A549 (cell line): ENCODE measurements at regions of chr18 and their contacts with region 1.

Region 1: GRCh38 chr18:12744103-12744502 is 41.3 kb downstream of the PSMG2 start:
- DNase-seq: peak; percentile 52 to 69
- ATAC-seq: peak; percentile 65 to 76; a peak in 4 of 6 replicates
- H3K4me3 ChIP-seq: no peak overlapping the region
- H3K27ac ChIP-seq: no peak overlapping the region
- H3K4me1 ChIP-seq: peaks cover 36% of the 10 kb centered on the region
- CTCF ChIP-seq: peak; percentile 62
- EP300 ChIP-seq: no peak
- POLR2A ChIP-seq: no peak
- RAD21 ChIP-seq: peak; percentile 70 to 81

Region 2: GRCh38 chr18:12721495-12722275 is 22.4 kb before region 1 on chr18:
- CTCF ChIA-PET with region 1: interaction called, 83 read pairs
- POLR2A ChIA-PET with region 1: interaction called, 3 read pairs
- DNase-seq: no peak
- ATAC-seq: no peak
- H3K4me3 ChIP-seq: no peak overlapping the region
- H3K27ac ChIP-seq: no peak overlapping the region
- H3K4me1 ChIP-seq: no peaks in the 10 kb centered on the region
- CTCF ChIP-seq: no peak
- EP300 ChIP-seq: no peak
- POLR2A ChIP-seq: no peak
- RAD21 ChIP-seq: no peak

Region 3: DNA sequence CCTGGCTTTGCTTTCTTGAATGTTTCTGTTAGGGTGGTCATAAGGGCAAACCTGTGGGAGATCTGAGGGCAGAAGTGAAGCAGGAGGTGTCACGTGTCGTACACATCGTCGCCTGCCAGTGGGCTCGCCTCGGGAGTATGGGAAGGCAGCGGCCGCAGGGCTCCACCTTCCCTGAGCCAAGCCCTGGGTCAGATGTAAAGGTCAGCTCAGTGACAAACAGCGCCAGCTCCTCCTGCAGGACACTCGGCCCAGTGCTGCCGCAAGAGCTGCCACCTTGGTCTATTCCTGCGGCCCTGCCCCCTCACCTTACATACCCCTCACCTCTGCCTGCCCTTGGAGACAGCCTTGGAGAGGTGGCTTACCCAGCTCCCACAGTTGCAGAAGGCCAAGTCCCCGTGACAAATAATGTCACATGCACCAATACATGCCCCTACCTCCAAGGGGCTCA is 22.9 kb after region 1 on chr18:
- CTCF ChIA-PET with region 1: interaction called, 16 read pairs
- POLR2A ChIA-PET with region 1: no interaction called
- DNase-seq: peak; percentile 22 to 32
- ATAC-seq: peak; percentile 62 to 85; a peak in 5 of 6 replicates
- H3K4me3 ChIP-seq: no peak overlapping the region
- H3K27ac ChIP-seq: 0 out of 6 replicates have a peak overlapping the region, but pooled peaks of 1 of the 2 experiments have one; percentile 26
- H3K4me1 ChIP-seq: no peaks in the 10 kb centered on the region
- CTCF ChIP-seq: no peak
- EP300 ChIP-seq: no peak
- POLR2A ChIP-seq: no peak
- RAD21 ChIP-seq: peak; percentile 18 to 40; a peak in 2 of 5 replicates

Region 4: GRCh38 chr18:12890506-12890905 is 146.4 kb after region 1 on chr18:
- CTCF ChIA-PET with region 1: interaction called, 84 read pairs
- POLR2A ChIA-PET with region 1: no interaction called
- DNase-seq: peak in 1 of 2 experiments; percentile 22
- ATAC-seq: peak; percentile 83 to 85; a peak in 5 of 6 replicates
- H3K4me3 ChIP-seq: no peak overlapping the region
- H3K27ac ChIP-seq: no peak overlapping the region
- H3K4me1 ChIP-seq: 0 out of 3 replicates have a peak, but pooled peaks cover 3% of the 10 kb centered on the region
- CTCF ChIP-seq: no peak
- EP300 ChIP-seq: no peak
- POLR2A ChIP-seq: no peak
- RAD21 ChIP-seq: 0 out of 5 replicates have a peak, but pooled peaks of 1 of the 2 experiments have one; percentile 16

Region 5: GRCh38 chr18:12947355-12948041 is 203.4 kb after region 1 on chr18 and contains the start of gene SEH1L:
- CTCF ChIA-PET with region 1: interaction called, 10 read pairs
- POLR2A ChIA-PET with region 1: no interaction called
- DNase-seq: peak; percentile 61 to 98
- ATAC-seq: peak; percentile 88 to 94
- H3K4me3 ChIP-seq: peak within 1 kb of the TSS; percentile 85
- H3K27ac ChIP-seq: peak within 1 kb of the TSS; percentile 90 to 92
- H3K4me1 ChIP-seq: peaks cover 7% of the 10 kb centered on the region
- CTCF ChIP-seq: no peak
- EP300 ChIP-seq: no peak
- POLR2A ChIP-seq: peak; percentile 54
- RAD21 ChIP-seq: no peak
- polyA plus RNA-seq, gene SEH1L: 63.1 and 70.6 TPM in 2 replicates

Region 6: GRCh38 chr18:13051950-13052349 is 307.8 kb after region 1 on chr18:
- CTCF ChIA-PET with region 1: no interaction called
- POLR2A ChIA-PET with region 1: no interaction called
- DNase-seq: no peak
- ATAC-seq: no peak
- H3K4me3 ChIP-seq: no peak overlapping the region
- H3K27ac ChIP-seq: no peak overlapping the region
- H3K4me1 ChIP-seq: no peaks in the 10 kb centered on the region
- CTCF ChIP-seq: no peak
- EP300 ChIP-seq: no peak
- POLR2A ChIP-seq: no peak
- RAD21 ChIP-seq: no peak